Ascending aorta (tissue), 2 donors: ENCODE measurements at regions of chr13 and their contacts with region 1.

Region 1: DNA sequence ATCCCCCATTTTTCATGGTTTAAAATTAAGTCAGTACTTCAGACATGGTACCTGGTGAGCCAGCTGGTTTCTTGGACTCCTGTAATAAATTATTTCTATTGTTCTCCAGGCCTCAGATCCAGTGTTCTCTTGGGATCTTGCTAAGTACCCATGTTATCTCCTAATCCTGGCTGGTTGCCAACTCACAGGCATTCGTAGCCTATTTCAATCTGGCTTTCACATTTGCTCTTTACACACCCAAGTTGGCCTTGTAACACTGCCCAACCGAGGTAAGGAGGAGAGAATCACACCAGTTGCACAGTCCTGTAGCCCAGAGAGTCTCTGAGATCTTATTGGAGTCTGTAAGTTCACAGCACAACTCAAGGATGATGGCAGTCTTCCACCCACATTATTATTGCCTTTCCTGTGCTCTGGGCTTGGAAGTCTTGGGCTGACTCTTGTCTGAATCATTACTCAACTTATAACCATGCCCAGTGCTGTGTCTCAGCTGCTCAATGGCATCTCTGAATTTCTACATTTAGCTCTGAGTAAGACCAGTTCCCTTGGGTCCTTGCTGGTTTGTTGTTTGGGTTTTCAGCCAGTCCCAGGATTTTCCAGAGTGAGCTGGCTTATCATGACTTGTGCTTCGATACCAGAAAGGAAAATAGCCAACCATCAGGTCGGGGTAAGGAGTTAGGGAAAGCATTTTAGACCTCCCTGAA is 76.6 kb upstream of the KLF12 start:
- DNase-seq: peak; percentile 30 to 89
- H3K4me3 ChIP-seq: peak overlapping the region in 1 of 2 donors; percentile 7
- H3K27ac ChIP-seq: peak overlapping the region; percentile 69 to 87
- H3K4me1 ChIP-seq: peaks cover 0 to 9% of the 10 kb centered on the region in 2 donors
- H3K27me3 ChIP-seq: no peaks in the 10 kb centered on the region
- CTCF ChIP-seq: no peak

Region 2: DNA sequence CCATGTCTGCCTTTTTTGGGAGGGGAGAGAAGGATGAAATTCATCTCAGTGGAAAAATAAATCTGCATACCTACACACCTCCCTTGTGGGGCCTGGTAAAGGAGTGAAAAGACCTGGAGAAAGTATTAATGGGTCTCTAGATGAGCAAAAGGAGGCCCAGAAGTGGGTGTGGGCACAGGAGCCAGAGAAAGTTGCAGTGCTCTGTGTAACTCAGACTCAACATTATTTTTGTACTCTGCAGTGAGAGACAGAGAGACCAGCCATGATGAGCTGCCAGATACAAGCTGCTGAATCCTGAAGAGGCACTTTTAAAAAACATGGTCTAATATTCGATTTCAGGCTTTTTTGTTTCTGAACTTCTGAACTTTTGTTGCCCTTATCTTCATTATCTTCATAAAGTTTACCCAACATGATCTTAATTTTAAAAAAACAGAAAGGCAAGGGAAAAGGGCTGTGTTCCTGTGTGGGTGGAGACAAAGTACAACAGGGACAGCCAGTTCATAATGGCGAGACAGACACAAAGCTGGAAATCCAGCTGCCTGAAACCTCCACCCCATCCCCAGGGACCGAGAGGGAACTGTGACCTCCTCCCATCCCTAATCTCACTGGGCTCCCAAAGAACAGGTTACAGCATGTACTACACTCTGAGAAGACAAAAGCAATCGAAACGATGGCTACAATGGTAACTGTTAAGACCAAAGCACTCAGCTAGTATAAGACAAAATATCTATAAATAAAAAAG is 153.9 kb before region 1 on chr13:
- intact Hi-C with region 1: loop called (anchors 10 kb)
- DNase-seq: no peak
- H3K4me3 ChIP-seq: no peak overlapping the region
- H3K27ac ChIP-seq: peak overlapping the region; percentile 69 to 80
- H3K4me1 ChIP-seq: peaks cover 9 to 51% of the 10 kb centered on the region in 2 donors
- H3K27me3 ChIP-seq: no peaks in the 10 kb centered on the region
- CTCF ChIP-seq: no peak

Region 3: DNA sequence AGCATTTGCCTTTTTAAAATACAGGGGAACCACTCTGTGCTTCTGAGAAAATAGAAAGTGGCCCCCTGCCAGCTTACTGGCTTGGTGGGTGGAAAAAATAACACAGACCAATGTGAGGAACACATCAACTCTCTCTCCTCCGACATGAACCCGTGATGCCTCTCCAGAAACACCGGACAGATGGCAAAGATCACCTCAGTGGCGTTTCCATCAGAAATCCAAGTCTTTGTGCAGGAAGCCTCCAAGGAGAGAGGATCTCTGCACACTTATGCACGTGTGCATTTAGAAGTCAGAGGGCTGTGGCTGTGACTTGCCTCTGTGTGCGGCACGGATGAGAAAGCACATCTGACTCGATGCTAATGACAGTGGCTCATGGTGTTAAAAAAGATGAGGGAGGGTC is 35.6 kb after region 1 on chr13:
- intact Hi-C with region 1: loop called (anchors 5 kb)
- DNase-seq: no peak
- H3K4me3 ChIP-seq: peak overlapping the region in 1 of 2 donors; percentile 4
- H3K27ac ChIP-seq: no peak overlapping the region
- H3K4me1 ChIP-seq: peaks cover 3 to 7% of the 10 kb centered on the region in 2 donors
- H3K27me3 ChIP-seq: no peaks in the 10 kb centered on the region
- CTCF ChIP-seq: no peak